Thyroid gland (tissue), 4 donors: ENCODE measurements at regions of chr14 and their contacts with region 1.

Region 1: GRCh38 chr14:91059576-91060350 is 678 bp downstream of the RPS6KA5 start:
- DNase-seq: peak; percentile 64 to 66
- H3K4me3 ChIP-seq: peak overlapping the region; percentile 72 to 87 (median 73)
- H3K27ac ChIP-seq: peak overlapping the region; percentile 90 to 97 (median 95)
- H3K4me1 ChIP-seq: peaks cover 6 to 12% of the 10 kb centered on the region in 2 donors
- H3K27me3 ChIP-seq: no peaks in the 10 kb centered on the region
- CTCF ChIP-seq: no peak
- POLR2A ChIP-seq: no peak

Region 2: GRCh38 chr14:91177073-91178034 is 117.6 kb after region 1 on chr14:
- intact Hi-C with region 1: loop called (anchors 10 kb)
- DNase-seq: peak; percentile 56 to 59
- H3K4me3 ChIP-seq: no peak overlapping the region
- H3K27ac ChIP-seq: no peak overlapping the region
- H3K4me1 ChIP-seq: no peaks in the 10 kb centered on the region
- H3K27me3 ChIP-seq: no peaks in the 10 kb centered on the region
- CTCF ChIP-seq: peak; percentile 65 to 81 (median 72)
- POLR2A ChIP-seq: no peak